Activated CD8-positive, alpha-beta T cell treated with anti-CD3 and anti-CD28 coated beads, Interleukin-2, amount 10 ng/mL, durations not matched to agents 7 days and 5 days (primary cell): ENCODE measurements at regions of chr6 and their contacts with region 1.

Region 1: GRCh38 chr6:25369433-25370181 is 90.4 kb downstream of the CARMIL1 start:
- DNase-seq: peak; percentile 39
- ATAC-seq: peak; percentile 22
- H3K4me3 Mint-ChIP-seq: peak overlapping the region; percentile 39
- H3K27ac Mint-ChIP-seq: peak overlapping the region; percentile 81
- H3K4me1 Mint-ChIP-seq: peaks cover 71% of the 10 kb centered on the region
- H3K27me3 Mint-ChIP-seq: no peaks in the 10 kb centered on the region

Region 2: GRCh38 chr6:25237579-25237978 is 132.0 kb before region 1 on chr6:
- CTCF ChIA-PET with region 1: no interaction called
- POLR2A ChIA-PET with region 1: no interaction called
- DNase-seq: no peak
- ATAC-seq: no peak
- H3K4me3 Mint-ChIP-seq: no peak overlapping the region
- H3K27ac Mint-ChIP-seq: no peak overlapping the region
- H3K4me1 Mint-ChIP-seq: no peaks in the 10 kb centered on the region
- H3K27me3 Mint-ChIP-seq: no peaks in the 10 kb centered on the region

Region 3: DNA sequence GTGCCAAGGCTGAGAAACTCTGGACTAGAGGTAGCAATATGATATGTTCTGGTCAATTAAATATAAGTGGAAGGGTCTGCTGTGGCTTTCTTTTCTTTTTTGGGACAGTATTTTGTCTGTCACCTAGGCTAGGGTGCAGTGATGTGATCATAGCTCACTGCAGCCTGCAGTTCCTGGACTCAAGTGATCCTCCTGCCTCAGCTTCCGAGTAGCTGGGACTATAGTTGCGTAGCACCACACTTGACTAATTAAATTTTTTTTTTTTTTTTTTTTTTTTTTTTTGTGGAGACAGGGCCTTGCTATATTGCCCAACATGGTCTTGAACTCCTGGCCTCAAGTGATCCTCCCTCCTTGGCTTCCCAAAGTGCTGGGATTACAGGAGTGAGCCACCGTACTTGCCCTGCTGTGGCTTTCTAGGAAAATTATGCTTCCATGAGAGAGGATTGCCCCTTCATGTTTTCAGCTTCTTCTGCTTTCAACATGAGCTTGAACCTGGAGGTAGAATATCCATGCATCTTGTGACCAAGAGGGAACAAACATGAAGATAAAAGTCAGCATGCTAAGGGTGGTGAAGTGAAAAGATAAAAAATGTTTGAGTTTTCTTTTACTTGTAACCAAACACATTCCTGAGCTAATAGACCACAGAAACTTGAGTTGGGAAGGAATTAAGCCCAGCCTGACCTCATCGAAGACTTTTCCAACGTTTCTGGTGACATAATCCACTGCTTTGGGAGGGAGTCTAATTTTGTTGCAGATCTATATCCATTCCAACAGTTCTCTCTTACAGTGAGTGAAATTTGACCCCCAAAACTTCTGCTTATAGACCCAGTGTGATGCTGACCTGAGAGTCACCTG is 15.3 kb before region 1 on chr6:
- CTCF ChIA-PET with region 1: interaction called, 18 read pairs
- POLR2A ChIA-PET with region 1: no interaction called
- DNase-seq: no peak
- ATAC-seq: no peak
- H3K4me3 Mint-ChIP-seq: no peak overlapping the region
- H3K27ac Mint-ChIP-seq: no peak overlapping the region
- H3K4me1 Mint-ChIP-seq: peaks cover 8% of the 10 kb centered on the region
- H3K27me3 Mint-ChIP-seq: no peaks in the 10 kb centered on the region

Region 4: GRCh38 chr6:25404693-25405169 is 35.1 kb after region 1 on chr6:
- CTCF ChIA-PET with region 1: interaction called, 18 read pairs
- POLR2A ChIA-PET with region 1: interaction called, 7 read pairs
- DNase-seq: peak; percentile 57
- ATAC-seq: peak; percentile 85
- H3K4me3 Mint-ChIP-seq: no peak overlapping the region
- H3K27ac Mint-ChIP-seq: no peak overlapping the region
- H3K4me1 Mint-ChIP-seq: peaks cover 17% of the 10 kb centered on the region
- H3K27me3 Mint-ChIP-seq: no peaks in the 10 kb centered on the region